Activated T-helper 1 cell treated with anti-CD3 and anti-CD28 coated beads, Interleukin-12 subunit alpha, Interleukin-12 subunit beta, Interleukin-2, Interleukin-4 antibody, amounts not matched to agents 30 ng/mL and 10 ng/mL and 1 ng/mL, durations not matched to agents 14 hours and 24 hours and 36 hours (primary cell): ENCODE measurements at regions of chr7 and their contacts with region 1.

Region 1: DNA sequence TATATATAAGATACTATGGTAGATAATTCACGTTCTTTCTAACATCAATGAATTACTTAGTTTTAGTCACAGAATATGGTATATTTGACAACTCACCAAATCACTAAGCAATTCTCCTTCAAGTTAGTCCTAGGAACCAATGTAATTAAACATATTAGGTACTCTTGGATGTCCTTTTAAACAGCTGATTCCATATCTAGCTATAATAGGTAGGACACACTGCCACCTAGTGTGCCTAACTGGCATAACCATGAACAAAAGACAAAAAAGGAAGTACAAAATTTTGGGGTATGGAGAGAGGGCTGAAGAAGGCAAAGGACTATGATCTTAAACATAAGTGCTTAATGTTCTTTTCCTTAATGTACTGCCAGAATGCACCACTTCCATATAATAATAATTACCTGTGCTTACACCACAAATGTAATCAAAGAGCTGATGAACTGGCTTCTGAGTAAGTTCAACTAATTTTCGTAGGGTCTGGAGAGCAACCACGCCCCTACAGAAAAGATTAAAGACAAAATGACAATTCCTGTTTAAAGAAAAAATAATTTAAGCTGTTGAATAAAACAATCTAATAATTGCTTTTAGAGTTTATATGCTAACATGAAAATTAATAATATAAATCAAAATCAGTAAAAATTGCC is 28.7 kb downstream of the PNPLA8 start:
- DNase-seq: peak; percentile 16
- H3K4me3 Mint-ChIP-seq: no peak overlapping the region
- H3K27ac Mint-ChIP-seq: no peak overlapping the region
- H3K4me1 Mint-ChIP-seq: no peaks in the 10 kb centered on the region
- H3K27me3 Mint-ChIP-seq: no peaks in the 10 kb centered on the region

Region 2: DNA sequence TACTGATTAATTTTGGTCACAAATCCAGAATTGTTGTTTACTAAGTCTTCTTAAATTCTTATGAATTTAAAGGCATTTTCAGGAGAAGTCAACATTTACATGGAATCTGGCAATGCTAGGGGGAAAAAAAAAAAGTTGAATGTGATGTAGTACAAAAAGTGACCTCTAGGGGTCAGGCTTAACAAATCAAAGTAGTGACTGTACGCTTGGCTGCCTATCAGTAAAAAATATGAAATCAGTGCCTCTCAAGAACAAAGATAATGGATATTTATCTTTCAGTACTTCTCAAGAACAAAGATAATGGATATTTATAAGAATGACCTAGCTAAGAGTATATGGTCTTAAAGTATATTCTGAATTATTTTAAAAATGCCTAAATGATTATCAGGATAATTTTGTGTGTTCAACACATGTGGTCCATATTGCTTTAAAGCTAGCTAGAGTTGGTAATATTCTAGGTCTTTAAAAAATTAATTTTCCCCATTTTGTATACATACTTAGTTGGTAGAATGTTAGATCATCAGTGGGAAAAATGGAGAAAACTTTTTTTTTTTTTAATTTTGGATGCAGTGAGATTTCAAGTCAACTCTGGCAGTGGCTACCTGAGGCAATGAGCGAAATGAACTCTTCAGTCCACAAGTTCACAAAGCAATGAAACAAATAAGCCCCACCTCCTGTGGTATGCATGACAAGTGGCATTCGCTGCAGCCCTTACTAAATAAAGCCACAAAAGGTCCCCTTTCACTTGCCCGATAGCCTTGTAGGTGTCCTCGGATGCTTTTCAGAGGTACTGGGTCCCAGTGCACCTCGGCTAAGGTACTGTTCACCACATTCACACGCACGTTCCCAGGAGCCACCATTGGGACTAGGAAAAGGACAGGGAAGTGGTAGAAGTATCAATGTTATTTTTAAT is 315.9 kb before region 1 on chr7:
- intact Hi-C with region 1: loop called (anchors 1 kb)
- DNase-seq: no peak
- H3K4me3 Mint-ChIP-seq: no peak overlapping the region
- H3K27ac Mint-ChIP-seq: no peak overlapping the region
- H3K4me1 Mint-ChIP-seq: no peaks in the 10 kb centered on the region
- H3K27me3 Mint-ChIP-seq: peaks cover 7% of the 10 kb centered on the region

Region 3: GRCh38 chr7:108311446-108312168 is 185.6 kb before region 1 on chr7:
- intact Hi-C with region 1: no loop called
- DNase-seq: no peak
- H3K4me3 Mint-ChIP-seq: no peak overlapping the region
- H3K27ac Mint-ChIP-seq: no peak overlapping the region
- H3K4me1 Mint-ChIP-seq: no peaks in the 10 kb centered on the region
- H3K27me3 Mint-ChIP-seq: no peaks in the 10 kb centered on the region

Region 4: DNA sequence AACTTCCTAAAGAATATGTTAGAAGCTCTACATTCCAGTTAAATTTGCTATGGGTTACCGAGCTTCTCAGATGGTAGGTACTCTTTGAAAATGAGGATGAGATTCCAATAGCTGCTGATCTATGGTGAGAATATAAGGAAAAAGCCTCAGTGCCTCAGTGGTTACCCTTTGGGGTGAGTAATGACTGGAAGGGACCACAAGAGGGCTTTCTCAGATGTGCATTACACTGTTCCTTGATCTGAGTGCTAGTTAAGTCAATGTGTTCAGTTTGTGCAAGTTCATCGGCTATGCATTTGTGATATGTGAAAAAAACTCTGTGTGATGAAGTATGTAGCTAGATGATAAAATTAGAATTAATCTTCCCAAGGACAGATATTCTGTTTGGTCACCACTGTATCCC is 44.5 kb before region 1 on chr7:
- intact Hi-C with region 1: loop called (anchors 1 kb)
- DNase-seq: no peak
- H3K4me3 Mint-ChIP-seq: no peak overlapping the region
- H3K27ac Mint-ChIP-seq: no peak overlapping the region
- H3K4me1 Mint-ChIP-seq: no peaks in the 10 kb centered on the region
- H3K27me3 Mint-ChIP-seq: peaks cover 42% of the 10 kb centered on the region

Region 5: GRCh38 chr7:108480311-108480710 is 16.9 kb before region 1 on chr7:
- intact Hi-C with region 1: no loop called
- DNase-seq: no peak
- H3K4me3 Mint-ChIP-seq: no peak overlapping the region
- H3K27ac Mint-ChIP-seq: no peak overlapping the region
- H3K4me1 Mint-ChIP-seq: no peaks in the 10 kb centered on the region
- H3K27me3 Mint-ChIP-seq: no peaks in the 10 kb centered on the region